ENCODE measurements at regions of chr3 and their contacts with region 1.

Region 1: DNA sequence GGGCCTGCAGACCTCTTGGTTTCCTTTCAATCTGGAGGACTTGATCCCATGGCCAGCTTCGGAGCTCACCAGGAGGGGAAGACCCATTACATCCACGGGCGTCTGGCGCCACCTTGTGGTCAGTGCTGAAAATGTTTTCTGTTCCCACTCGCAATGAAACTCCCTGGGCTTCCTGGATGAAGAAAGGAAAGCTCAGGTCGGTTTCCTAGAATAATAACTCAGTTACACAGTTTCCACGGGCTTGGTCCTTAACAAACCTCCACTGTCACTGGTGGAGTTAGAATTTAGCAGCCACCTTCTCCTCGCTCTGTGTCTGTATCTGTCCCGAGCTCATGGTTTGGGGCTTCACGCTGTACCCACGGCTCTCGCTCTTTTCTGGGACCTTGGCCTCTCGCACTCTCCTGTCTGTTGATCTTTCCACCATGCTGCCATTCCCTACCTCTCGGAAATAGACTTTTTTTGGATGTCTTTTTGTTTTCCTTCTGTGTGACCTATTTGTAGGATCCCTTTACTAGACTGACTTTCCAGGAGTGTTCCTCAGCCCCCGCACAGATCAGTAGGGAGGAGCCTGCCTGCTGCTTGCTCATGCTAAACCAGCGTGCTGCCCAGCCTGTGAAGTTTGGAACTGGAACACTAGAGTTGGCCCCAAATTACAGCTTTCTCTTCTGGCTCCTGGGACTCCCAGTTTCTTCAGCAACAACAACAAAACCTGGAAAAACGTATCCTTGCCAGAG is 56.3 kb downstream of the IL20RB start:
- DNase-seq: peak; percentile 91
- ATAC-seq: peak; percentile 99
- H3K4me3 ChIP-seq: peak overlapping the region; percentile 44
- H3K27ac ChIP-seq: no peak overlapping the region
- H3K4me1 ChIP-seq: no peaks in the 10 kb centered on the region
- H3K27me3 ChIP-seq: no peaks in the 10 kb centered on the region
- CTCF ChIP-seq: peak; percentile 91

Region 2: DNA sequence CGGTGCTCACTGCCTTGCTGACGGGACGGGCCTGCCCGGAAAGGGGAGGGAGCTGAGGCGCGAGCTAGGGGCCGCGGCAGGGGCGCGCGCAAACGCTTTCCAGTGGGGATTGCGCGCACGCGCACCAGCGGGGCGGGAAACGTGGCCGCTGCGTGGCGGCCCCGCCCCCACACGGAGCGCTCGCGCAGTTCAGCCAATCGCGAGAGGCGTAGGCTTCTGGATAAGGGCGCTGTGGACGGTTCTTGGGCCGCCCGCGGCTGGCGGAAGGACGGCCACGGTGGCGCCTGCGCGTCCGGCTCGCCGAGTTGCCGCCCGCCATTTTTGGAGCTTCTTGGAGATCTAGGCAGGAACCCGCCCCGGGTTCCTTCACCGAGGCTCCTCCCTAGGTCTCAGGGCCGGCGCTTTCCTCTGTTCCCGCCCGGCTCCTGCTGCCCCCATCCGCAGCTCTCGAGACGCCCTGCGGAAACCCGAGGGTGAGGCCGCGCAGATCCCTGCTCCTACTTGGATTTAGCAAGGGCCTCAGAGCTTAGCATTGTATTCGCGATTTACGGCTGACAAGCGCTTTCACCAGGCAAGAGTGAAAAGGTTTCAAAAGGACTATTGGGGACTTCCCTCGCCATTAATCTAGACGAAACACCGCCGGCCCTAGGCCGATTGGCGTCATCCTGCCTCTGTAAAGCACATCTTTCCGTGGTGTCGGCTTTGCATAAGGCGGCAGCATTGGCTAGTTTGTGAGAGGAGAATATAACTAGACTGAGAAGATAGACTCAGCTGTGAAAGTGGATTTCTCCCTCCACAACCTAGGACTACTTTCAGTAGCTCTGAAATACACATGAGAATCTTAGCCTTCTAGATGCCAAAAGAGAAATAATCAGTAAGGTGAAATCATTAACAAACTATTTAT is 261.4 kb before region 1 on chr3:
- intact Hi-C with region 1: loop called (anchors 10 kb)
- DNase-seq: peak; percentile 100
- ATAC-seq: peak; percentile 95
- H3K4me3 ChIP-seq: peak overlapping the region; percentile 68
- H3K27ac ChIP-seq: peak overlapping the region; percentile 98
- H3K4me1 ChIP-seq: peaks cover 29% of the 10 kb centered on the region
- H3K27me3 ChIP-seq: no peaks in the 10 kb centered on the region
- CTCF ChIP-seq: no peak

Region 3: GRCh38 chr3:136861890-136862616 is 152.1 kb before region 1 on chr3 and contains the start of gene NCK1:
- intact Hi-C with region 1: no loop called
- DNase-seq: peak; percentile 100
- ATAC-seq: peak; percentile 99
- H3K4me3 ChIP-seq: peak within 1 kb of the TSS; percentile 98
- H3K27ac ChIP-seq: peak within 1 kb of the TSS; percentile 96
- H3K4me1 ChIP-seq: peaks cover 35% of the 10 kb centered on the region
- H3K27me3 ChIP-seq: no peaks in the 10 kb centered on the region
- CTCF ChIP-seq: peak; percentile 25
- total RNA-seq, gene NCK1: 54.0 TPM

Measured in upper lobe of right lung (tissue), 1 donor.